Naive thymus-derived CD4-positive, alpha-beta T cell (primary cell): ENCODE measurements at regions of chr5 and their contacts with region 1.

Region 1: DNA sequence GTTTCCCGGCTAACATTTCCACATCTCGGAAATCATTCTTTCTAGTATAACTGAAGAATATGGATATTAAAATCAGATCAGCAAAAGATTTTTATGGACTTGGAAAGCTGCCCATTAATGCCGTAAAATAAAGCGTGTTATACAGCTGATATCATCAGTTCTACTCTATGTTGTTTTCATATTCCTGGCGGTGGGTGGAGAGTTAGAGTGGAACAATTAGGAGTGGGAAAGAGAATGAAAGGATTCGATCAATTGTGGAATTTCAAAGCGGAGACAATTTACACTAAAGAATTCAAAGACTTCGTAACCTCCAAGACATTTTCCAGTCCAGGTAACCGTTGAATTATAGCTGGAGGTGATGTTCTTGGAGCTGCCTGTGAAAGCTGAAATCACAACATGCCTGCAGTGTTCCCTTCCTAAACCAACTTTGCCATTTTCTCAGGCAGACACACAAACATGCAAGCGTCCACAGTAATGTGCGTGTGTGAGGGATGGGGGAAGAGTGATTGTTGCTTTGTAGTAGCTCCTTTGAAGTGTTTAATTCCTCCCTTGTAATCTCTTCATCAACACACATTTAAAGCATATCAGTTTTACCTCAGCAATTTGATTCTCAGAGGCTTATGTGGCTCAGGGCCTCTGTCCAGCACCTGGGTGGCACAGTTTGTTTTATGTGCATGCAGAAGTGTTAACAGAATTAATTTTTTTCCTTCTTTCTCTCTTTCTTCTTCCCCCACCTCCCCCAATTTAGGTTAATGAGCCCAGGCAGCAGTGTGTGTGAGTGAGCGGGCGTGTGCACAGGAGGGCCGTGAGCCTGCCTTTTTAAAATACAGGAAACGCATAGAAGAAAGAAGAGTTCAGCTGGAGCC is 544.1 kb downstream of the RAB3C start:
- DNase-seq: peak in 1 of 9 donors; percentile 17
- ATAC-seq: peak; percentile 9
- H3K4me3 ChIP-seq: peak overlapping the region; percentile 46
- H3K4me3 Mint-ChIP-seq: no peak overlapping the region
- H3K27ac ChIP-seq: peak overlapping the region; percentile 84
- H3K27ac Mint-ChIP-seq: no peak overlapping the region
- H3K4me1 ChIP-seq: peaks cover 58 to 59% of the 10 kb centered on the region in 2 donors
- H3K4me1 Mint-ChIP-seq: peaks cover 0 to 20% (median 7%) of the 10 kb centered on the region in 7 donors
- H3K27me3 ChIP-seq: no peaks in the 10 kb centered on the region
- H3K27me3 Mint-ChIP-seq: no peaks in the 10 kb centered on the region

Region 2: DNA sequence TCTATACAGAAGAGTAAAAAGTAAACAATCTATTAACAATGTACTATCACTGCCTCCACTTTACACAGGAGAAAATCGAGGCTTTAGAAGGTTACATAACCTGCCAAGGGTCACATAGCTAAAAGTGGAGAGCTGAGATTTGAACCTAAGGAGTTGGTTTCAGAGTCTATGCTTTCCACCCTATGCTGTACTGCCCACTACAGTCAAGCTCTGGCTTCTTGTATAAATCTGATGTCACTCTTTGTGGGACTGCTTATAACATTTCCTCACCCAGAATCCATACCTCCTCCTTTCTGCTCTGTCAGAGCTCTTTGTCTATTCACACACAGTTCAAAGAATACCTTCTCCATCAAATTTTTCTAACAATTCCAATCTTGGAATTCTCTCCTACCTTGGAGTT is 40.9 kb before region 1 on chr5:
- CTCF ChIA-PET with region 1: no interaction called
- POLR2A ChIA-PET with region 1: no interaction called
- intact Hi-C with region 1: loop called in 1 of 2 experiments (anchors 5 kb)
- DNase-seq: peak in 1 of 9 donors; percentile 17
- ATAC-seq: no peak
- H3K4me3 ChIP-seq: no peak overlapping the region
- H3K4me3 Mint-ChIP-seq: no peak overlapping the region
- H3K27ac ChIP-seq: no peak overlapping the region
- H3K27ac Mint-ChIP-seq: peak overlapping the region in 2 of 9 donors; percentile 0 to 27
- H3K4me1 ChIP-seq: no peaks in the 10 kb centered on the region
- H3K4me1 Mint-ChIP-seq: peaks cover 0 to 17% (median 0%) of the 10 kb centered on the region in 7 donors
- H3K27me3 ChIP-seq: peaks cover 0 to 3% of the 10 kb centered on the region in 2 donors
- H3K27me3 Mint-ChIP-seq: peaks cover 0 to 33% (median 0%) of the 10 kb centered on the region in 5 donors

Region 3: DNA sequence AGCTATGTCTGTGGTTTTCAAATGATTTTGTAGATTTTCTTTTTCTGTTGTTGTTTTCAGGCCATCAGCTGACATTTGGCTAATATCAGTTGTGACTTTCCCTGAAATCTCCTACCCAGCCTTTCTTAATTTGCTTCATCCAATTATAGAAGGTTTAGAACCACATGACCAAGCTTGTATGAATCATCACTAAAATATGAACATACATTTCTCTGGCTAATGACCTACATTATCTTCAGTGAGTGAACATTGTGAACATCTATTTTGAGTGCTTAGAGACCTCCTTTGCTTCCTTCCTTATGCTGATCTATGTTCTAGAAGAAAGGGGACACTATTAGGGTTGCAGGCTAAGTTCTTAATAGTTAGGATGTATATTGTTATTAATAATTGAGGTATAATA is 11.6 kb before region 1 on chr5:
- CTCF ChIA-PET with region 1: interaction called, 3 read pairs
- POLR2A ChIA-PET with region 1: interaction called, 8 read pairs
- intact Hi-C with region 1: loop called in 1 of 2 experiments (anchors 1 kb)
- DNase-seq: no peak
- ATAC-seq: no peak
- H3K4me3 ChIP-seq: no peak overlapping the region
- H3K4me3 Mint-ChIP-seq: no peak overlapping the region
- H3K27ac ChIP-seq: no peak overlapping the region
- H3K27ac Mint-ChIP-seq: no peak overlapping the region
- H3K4me1 ChIP-seq: no peaks in the 10 kb centered on the region
- H3K4me1 Mint-ChIP-seq: peaks cover under 1 to 22% (median 9%) of the 10 kb centered on the region in 7 donors
- H3K27me3 ChIP-seq: no peaks in the 10 kb centered on the region
- H3K27me3 Mint-ChIP-seq: no peaks in the 10 kb centered on the region

Region 4: GRCh38 chr5:59152701-59153245 is 25.8 kb after region 1 on chr5:
- CTCF ChIA-PET with region 1: interaction called, 7 read pairs
- POLR2A ChIA-PET with region 1: interaction called, 6 read pairs
- intact Hi-C with region 1: loop called (anchors 1 to 2 kb)
- DNase-seq: peak in 1 of 9 donors; percentile 26
- ATAC-seq: peak; percentile 64
- H3K4me3 ChIP-seq: no peak overlapping the region
- H3K4me3 Mint-ChIP-seq: peak overlapping the region in 8 of 10 donors; percentile 0 to 61 (median 28)
- H3K27ac ChIP-seq: no peak overlapping the region
- H3K27ac Mint-ChIP-seq: peak overlapping the region in 6 of 9 donors; percentile 40 to 81 (median 69)
- H3K4me1 ChIP-seq: peaks cover 8 to 10% of the 10 kb centered on the region in 2 donors
- H3K4me1 Mint-ChIP-seq: peaks cover 0 to 16% (median 2%) of the 10 kb centered on the region in 7 donors
- H3K27me3 ChIP-seq: no peaks in the 10 kb centered on the region
- H3K27me3 Mint-ChIP-seq: no peaks in the 10 kb centered on the region

Region 5: GRCh38 chr5:59174248-59174844 is 47.4 kb after region 1 on chr5:
- CTCF ChIA-PET with region 1: interaction called, 24 read pairs
- POLR2A ChIA-PET with region 1: interaction called, 26 read pairs
- intact Hi-C with region 1: loop called (anchors 1 kb)
- DNase-seq: peak in 7 of 9 donors; percentile 35 to 67 (median 54)
- ATAC-seq: peak; percentile 86
- H3K4me3 ChIP-seq: no peak overlapping the region
- H3K4me3 Mint-ChIP-seq: no peak overlapping the region
- H3K27ac ChIP-seq: no peak overlapping the region
- H3K27ac Mint-ChIP-seq: peak overlapping the region in 1 of 9 donors; percentile 5
- H3K4me1 ChIP-seq: no peaks in the 10 kb centered on the region
- H3K4me1 Mint-ChIP-seq: peaks cover 0 to 48% (median 5%) of the 10 kb centered on the region in 7 donors
- H3K27me3 ChIP-seq: no peaks in the 10 kb centered on the region
- H3K27me3 Mint-ChIP-seq: no peaks in the 10 kb centered on the region